ENCODE measurements at regions of chr17 and their contacts with region 1.

Region 1: GRCh38 chr17:43946069-43946696 is 3.9 kb upstream of the PPY start:
- DNase-seq: peak; percentile 46
- ATAC-seq: no peak
- H3K4me3 Mint-ChIP-seq: no peak overlapping the region
- H3K27ac Mint-ChIP-seq: no peak overlapping the region
- H3K4me1 Mint-ChIP-seq: peaks cover 14% of the 10 kb centered on the region
- H3K27me3 Mint-ChIP-seq: peaks cover 33% of the 10 kb centered on the region

Region 2: DNA sequence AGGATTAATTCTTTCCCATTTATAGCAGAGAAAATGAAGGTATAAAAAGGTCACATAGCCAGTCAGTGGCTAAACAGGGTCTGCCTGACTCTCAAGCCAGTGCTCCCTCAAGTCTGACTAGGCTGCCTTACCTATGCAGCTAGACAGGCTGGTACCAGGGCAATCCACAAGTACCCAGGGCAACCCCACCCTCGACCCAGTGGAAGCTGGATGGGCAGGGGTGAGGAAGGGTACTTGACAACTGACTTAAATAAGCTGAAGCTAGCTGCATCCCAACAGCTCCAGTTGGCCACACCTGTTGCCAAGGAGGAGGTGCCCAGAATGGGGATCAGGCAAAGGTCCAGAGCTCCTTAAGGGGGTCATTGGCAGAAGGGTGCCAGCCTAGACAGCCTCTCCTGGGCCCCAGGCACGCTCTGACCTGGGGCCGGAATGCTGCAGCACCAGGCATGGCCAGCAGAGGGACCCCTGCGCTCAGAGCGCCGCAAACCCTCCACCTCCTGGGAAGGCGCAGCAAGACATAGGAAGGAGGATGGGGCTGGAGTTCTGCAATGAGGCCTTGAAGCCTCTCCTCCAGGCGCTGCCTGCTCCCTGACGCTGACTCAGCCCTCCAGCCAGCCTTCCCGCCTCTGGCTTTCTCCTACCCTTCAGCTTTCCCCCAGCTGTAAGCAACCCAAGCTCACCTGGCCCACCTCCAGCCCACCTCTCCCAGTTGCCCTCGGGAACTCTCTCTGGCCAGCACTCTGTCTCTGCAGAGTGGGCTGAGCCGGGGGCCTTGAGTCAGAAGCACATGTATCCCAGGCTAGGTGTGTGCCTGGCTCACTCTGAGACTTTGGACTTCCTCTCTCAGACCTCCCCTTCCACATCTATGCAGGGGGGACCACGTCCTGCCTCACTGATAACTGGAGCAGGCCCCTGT is 67.7 kb before region 1 on chr17:
- CTCF ChIA-PET with region 1: interaction called, 22 read pairs
- DNase-seq: peak; percentile 64
- ATAC-seq: peak; percentile 85
- H3K4me3 Mint-ChIP-seq: no peak overlapping the region
- H3K27ac Mint-ChIP-seq: no peak overlapping the region
- H3K4me1 Mint-ChIP-seq: no peaks in the 10 kb centered on the region
- H3K27me3 Mint-ChIP-seq: peaks cover 4% of the 10 kb centered on the region

Region 3: DNA sequence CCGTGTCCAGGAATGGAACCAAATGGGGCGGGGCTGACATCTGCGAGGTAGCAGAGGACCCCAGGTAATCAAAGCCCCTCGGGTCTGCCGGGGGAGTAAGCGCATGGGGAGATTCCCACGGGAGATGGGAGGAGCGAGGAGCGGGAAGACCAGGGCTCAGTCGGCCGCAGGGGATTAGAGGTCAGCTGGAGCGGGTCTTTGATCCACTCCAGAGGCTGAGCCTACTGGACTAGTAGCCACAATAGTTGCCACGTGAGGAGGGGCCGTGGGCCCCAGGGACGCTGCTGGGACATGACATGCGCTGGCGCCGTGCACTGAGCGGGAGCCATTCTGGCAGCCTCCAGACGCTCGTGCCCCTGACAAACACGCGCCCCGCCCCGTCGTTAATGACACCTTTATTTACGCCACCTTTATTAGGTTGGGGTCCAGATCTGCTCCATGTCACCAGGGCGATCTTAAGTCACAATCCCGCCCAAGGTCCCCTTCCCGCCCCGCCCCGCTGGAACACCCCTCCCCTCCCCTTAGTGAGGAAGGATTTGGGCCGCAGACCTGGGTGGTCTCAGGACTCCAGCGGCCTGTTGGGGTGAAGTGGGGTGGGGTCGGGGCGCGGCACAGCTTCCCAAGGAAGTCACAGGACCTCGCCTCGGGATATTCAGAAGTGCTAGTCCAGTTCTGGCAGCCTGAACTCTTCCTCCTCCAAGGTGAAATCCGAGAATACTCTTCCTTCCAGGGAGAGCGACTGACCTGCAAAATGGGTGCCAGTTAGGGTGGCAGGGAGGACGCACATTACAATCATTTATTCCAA is 18.9 kb before region 1 on chr17:
- CTCF ChIA-PET with region 1: interaction called, 18 read pairs
- DNase-seq: no peak
- ATAC-seq: no peak
- H3K4me3 Mint-ChIP-seq: peak overlapping the region; percentile 50
- H3K27ac Mint-ChIP-seq: no peak overlapping the region
- H3K4me1 Mint-ChIP-seq: peaks cover 27% of the 10 kb centered on the region
- H3K27me3 Mint-ChIP-seq: peaks cover 21% of the 10 kb centered on the region

Region 4: DNA sequence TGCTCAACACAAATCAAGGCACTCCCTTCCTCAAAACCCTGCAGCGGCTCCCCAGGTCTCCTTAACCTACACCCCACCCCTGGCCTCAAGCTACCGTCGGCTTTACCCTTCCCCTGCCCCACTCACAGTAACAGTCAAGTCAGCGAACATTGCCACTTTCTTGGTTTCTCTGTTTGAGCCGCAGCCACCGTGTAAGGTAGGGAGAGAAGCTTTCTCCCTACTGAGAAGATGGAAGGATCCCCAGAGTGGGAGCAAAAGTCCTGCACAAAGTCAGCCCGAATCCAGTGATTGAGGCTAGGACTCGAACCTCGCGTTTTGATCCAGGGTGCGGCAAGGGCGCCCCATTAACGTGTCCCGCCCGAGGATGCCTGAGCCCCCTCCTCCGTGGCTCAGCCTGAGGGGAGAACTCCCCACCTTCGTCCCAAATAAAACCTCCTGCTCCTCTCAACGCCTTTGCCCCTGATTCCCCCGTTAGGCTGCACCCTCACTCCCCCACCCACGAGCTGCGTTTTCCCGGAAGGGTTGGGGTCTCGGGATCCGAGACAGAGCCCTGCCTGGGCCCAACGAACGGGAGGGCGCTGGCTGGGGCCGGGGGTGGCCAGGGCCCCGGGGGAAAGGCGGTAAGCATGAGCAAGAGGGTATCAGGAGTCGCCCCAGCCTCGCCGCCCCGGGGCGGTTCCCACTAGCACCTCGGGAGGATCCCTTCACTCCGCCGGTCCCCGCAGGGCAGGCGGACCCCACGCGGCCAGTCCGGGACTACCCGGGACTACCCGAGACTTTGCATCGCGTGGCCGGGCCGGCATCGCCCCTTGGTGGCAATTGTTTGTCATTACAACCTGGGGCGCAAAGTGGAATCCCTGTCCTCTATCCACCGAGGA is 48.3 kb after region 1 on chr17:
- CTCF ChIA-PET with region 1: interaction called, 67 read pairs
- DNase-seq: peak; percentile 75
- ATAC-seq: peak; percentile 87
- H3K4me3 Mint-ChIP-seq: no peak overlapping the region
- H3K27ac Mint-ChIP-seq: no peak overlapping the region
- H3K4me1 Mint-ChIP-seq: no peaks in the 10 kb centered on the region
- H3K27me3 Mint-ChIP-seq: peaks cover 26% of the 10 kb centered on the region

Region 5: GRCh38 chr17:44066204-44066930 is 120.2 kb after region 1 on chr17 and contains the start of gene LSM12:
- CTCF ChIA-PET with region 1: interaction called, 10 read pairs
- DNase-seq: peak; percentile 92
- ATAC-seq: peak; percentile 79
- H3K4me3 Mint-ChIP-seq: peak within 1 kb of the TSS; percentile 98
- H3K27ac Mint-ChIP-seq: peak within 1 kb of the TSS; percentile 89
- H3K4me1 Mint-ChIP-seq: peaks cover 46% of the 10 kb centered on the region
- H3K27me3 Mint-ChIP-seq: no peaks in the 10 kb centered on the region
- total RNA-seq, gene LSM12: 68.3 to 76.8 TPM